Activated CD4-positive, alpha-beta memory T cell treated with anti-CD3 and anti-CD28 coated beads for 36 hours (primary cell): ENCODE measurements at regions of chr4 and their contacts with region 1.

Region 1: DNA sequence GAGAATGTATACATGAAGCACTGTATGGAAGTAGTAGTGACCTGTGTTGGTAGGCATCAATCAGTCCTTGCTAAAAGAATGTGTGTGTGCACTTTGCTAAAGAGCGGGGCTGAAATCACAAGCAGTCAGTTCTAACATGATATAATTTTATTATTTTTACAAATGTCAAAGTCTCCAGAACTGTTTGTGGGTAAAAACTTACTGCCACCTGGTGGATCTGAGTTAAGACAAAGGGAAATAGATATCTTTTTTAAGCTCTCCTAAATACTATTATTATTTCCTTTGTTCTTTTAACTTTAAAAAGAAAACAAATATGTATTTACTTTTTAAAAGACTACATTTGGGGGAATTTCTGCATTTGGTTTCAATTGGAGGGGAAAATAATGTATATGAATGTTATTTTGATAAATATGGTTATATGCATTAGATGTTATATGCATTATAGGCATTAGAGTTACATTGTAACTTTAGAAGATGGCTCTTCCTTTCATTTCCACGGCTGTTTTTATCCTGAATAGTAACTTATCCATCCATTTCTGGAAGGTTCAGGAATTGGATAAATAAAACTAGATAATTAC is 7.8 kb upstream of the CLOCK start:
- DNase-seq: no peak
- H3K4me3 Mint-ChIP-seq: no peak overlapping the region
- H3K27ac Mint-ChIP-seq: no peak overlapping the region
- H3K4me1 Mint-ChIP-seq: peaks cover 10% of the 10 kb centered on the region
- H3K27me3 Mint-ChIP-seq: peaks cover 5% of the 10 kb centered on the region

Region 2: GRCh38 chr4:55184600-55185523 is 369.7 kb before region 1 on chr4:
- CTCF ChIA-PET with region 1: no interaction called
- POLR2A ChIA-PET with region 1: no interaction called
- intact Hi-C with region 1: loop called (anchors 2 kb)
- DNase-seq: peak; percentile 25
- H3K4me3 Mint-ChIP-seq: no peak overlapping the region
- H3K27ac Mint-ChIP-seq: no peak overlapping the region
- H3K4me1 Mint-ChIP-seq: no peaks in the 10 kb centered on the region
- H3K27me3 Mint-ChIP-seq: peaks cover 7% of the 10 kb centered on the region